Activated B cell treated with CpG ODN at 0.5 μM for 24 hours (primary cell): ENCODE measurements at regions of chr12 and their contacts with region 1.

Region 1: DNA sequence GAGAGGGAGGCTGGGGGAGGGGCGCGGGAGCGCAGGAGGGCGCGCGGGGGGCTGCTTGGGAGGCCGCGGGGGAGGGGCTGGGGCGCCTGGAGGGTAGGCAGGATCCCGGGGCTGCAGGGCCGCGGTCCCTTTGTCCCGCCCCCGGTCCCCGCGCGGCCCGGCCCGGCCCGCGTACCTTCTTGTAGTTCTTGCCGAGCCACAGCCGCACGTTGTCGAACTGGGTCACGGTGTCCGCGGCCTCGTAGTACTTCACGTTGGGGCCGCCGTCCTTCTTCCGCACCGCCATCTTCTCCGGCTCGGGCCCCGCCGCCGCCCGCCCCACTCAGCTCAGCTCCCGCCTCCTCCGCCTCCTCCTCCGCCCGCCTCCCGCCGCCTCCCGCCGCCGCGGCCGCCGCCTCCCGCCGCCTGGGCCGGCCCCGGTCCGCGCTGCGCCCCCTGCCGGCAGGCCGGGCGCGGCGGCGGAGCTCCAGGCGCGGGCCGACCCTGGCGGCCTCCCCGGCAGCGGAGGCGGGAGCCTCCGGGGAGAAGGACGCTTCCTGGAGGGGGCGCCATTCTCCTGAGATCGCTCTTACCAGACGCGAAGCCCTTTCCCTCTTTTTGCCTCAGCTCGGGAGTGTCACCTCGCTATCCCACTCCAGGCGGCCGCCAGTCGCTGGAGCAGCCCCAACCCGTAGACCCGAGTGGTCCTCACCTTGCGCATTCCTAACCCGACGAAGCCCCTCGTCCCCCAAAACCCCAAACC is at the start of gene SMARCC2:
- DNase-seq: peak; percentile 82
- ATAC-seq: peak; percentile 81
- H3K4me3 Mint-ChIP-seq: peak within 1 kb of the TSS; percentile 95
- H3K27ac Mint-ChIP-seq: peak within 1 kb of the TSS; percentile 96
- H3K4me1 Mint-ChIP-seq: peaks cover 43% of the 10 kb centered on the region
- H3K27me3 Mint-ChIP-seq: no peaks in the 10 kb centered on the region
- CTCF ChIP-seq: no peak
- total RNA-seq, gene SMARCC2: 109 and 136 TPM in 2 replicates

Region 2: DNA sequence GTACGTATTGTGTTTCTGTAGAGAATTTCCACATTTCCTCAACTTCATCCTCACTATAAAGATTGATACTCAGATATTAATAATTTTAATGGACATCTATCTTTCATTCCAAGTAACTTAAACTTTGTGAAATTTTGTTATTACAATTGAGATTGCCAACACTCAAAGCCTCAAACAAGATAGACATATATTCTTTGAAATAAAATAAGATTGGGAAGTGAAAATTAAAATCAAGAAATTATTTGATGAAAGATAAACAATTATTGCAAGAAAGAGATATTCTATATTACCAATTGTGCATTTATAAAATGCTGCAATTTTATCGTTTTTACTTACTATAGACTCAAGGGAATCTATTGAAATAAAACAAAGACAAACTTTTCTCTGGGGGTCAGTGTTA is 892.9 kb before region 1 on chr12 and contains the start of gene OR6C6:
- CTCF ChIA-PET with region 1: no interaction called
- POLR2A ChIA-PET with region 1: no interaction called
- intact Hi-C with region 1: no loop called
- DNase-seq: no peak
- ATAC-seq: no peak
- H3K4me3 Mint-ChIP-seq: no peak within 1 kb of the TSS
- H3K27ac Mint-ChIP-seq: no peak within 1 kb of the TSS
- H3K4me1 Mint-ChIP-seq: no peaks in the 10 kb centered on the region
- H3K27me3 Mint-ChIP-seq: peaks cover 19% of the 10 kb centered on the region
- CTCF ChIP-seq: no peak
- total RNA-seq, gene OR6C6: not detected in 2 replicates

Region 3: GRCh38 chr12:56007564-56008559 is 181.5 kb before region 1 on chr12:
- CTCF ChIA-PET with region 1: no interaction called
- POLR2A ChIA-PET with region 1: no interaction called
- intact Hi-C with region 1: no loop called
- DNase-seq: peak; percentile 71
- ATAC-seq: peak; percentile 92
- H3K4me3 Mint-ChIP-seq: peak overlapping the region; percentile 88
- H3K27ac Mint-ChIP-seq: peak overlapping the region; percentile 79
- H3K4me1 Mint-ChIP-seq: peaks cover 9% of the 10 kb centered on the region
- H3K27me3 Mint-ChIP-seq: no peaks in the 10 kb centered on the region
- CTCF ChIP-seq: no peak

Region 4: DNA sequence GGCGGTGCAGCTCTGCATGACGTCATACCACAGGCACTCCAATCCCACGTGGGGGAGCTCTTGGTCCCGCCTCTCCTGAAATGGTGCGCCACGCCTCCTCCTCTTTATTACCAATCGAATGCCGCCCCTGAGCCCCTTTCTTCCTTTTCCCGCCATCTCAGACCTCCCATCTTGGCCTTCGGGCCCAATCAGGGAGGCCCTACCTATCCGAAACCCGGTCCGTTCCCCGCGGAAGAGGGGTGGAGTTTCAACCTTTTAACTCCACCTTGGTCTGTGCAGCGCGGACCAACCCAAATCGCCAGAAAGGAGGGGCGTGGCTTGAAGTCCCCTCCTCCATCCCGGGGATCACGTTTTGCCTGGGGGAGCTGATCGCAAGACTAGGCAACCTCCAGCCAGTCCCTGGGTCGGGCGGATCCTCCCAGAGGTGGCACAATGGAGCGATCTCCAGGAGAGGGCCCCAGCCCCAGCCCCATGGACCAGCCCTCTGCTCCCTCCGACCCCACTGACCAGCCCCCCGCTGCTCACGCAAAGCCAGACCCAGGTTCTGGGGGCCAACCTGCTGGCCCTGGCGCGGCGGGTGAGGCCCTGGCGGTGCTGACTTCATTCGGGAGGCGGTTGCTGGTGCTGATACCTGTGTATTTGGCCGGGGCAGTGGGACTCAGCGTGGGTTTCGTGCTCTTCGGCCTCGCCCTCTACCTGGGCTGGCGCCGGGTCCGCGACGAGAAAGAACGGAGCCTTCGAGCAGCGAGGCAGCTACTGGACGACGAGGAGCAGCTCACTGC is 61.3 kb before region 1 on chr12 and contains the start of gene ESYT1:
- CTCF ChIA-PET with region 1: interaction called, 59 read pairs
- POLR2A ChIA-PET with region 1: interaction called, 75 read pairs
- intact Hi-C with region 1: loop called (anchors 1 kb)
- DNase-seq: peak; percentile 83
- ATAC-seq: peak; percentile 86
- H3K4me3 Mint-ChIP-seq: peak within 1 kb of the TSS; percentile 97
- H3K27ac Mint-ChIP-seq: peak within 1 kb of the TSS; percentile 98
- H3K4me1 Mint-ChIP-seq: peaks cover 69% of the 10 kb centered on the region
- H3K27me3 Mint-ChIP-seq: no peaks in the 10 kb centered on the region
- CTCF ChIP-seq: no peak
- total RNA-seq, gene ESYT1: 120 and 137 TPM in 2 replicates

Region 5: GRCh38 chr12:56178347-56178746 is 11.0 kb before region 1 on chr12:
- CTCF ChIA-PET with region 1: interaction called, 6 read pairs
- POLR2A ChIA-PET with region 1: interaction called, 10 read pairs
- intact Hi-C with region 1: no loop called
- DNase-seq: no peak
- ATAC-seq: no peak
- H3K4me3 Mint-ChIP-seq: no peak overlapping the region
- H3K27ac Mint-ChIP-seq: no peak overlapping the region
- H3K4me1 Mint-ChIP-seq: no peaks in the 10 kb centered on the region
- H3K27me3 Mint-ChIP-seq: no peaks in the 10 kb centered on the region
- CTCF ChIP-seq: no peak

Region 6: GRCh38 chr12:56258057-56258819 is 68.9 kb after region 1 on chr12 and contains the start of gene ANKRD52:
- CTCF ChIA-PET with region 1: interaction called, 7 read pairs
- POLR2A ChIA-PET with region 1: interaction called, 13 read pairs
- intact Hi-C with region 1: loop called (anchors 1 kb)
- DNase-seq: peak; percentile 89
- ATAC-seq: peak; percentile 94
- H3K4me3 Mint-ChIP-seq: peak within 1 kb of the TSS; percentile 91
- H3K27ac Mint-ChIP-seq: peak within 1 kb of the TSS; percentile 77
- H3K4me1 Mint-ChIP-seq: peaks cover 21% of the 10 kb centered on the region
- H3K27me3 Mint-ChIP-seq: no peaks in the 10 kb centered on the region
- CTCF ChIP-seq: peak; percentile 28
- total RNA-seq, gene ANKRD52: 44.1 and 44.8 TPM in 2 replicates

Region 7: GRCh38 chr12:56333679-56334489 is 144.5 kb after region 1 on chr12 and contains the start of gene PAN2:
- CTCF ChIA-PET with region 1: no interaction called
- POLR2A ChIA-PET with region 1: interaction called, 11 read pairs
- intact Hi-C with region 1: no loop called
- DNase-seq: peak; percentile 85
- ATAC-seq: peak; percentile 91
- H3K4me3 Mint-ChIP-seq: peak within 1 kb of the TSS; percentile 96
- H3K27ac Mint-ChIP-seq: peak within 1 kb of the TSS; percentile 100
- H3K4me1 Mint-ChIP-seq: peaks cover 46% of the 10 kb centered on the region
- H3K27me3 Mint-ChIP-seq: no peaks in the 10 kb centered on the region
- CTCF ChIP-seq: no peak
- total RNA-seq, gene PAN2: 86.3 and 98.9 TPM in 2 replicates